Dorsolateral prefrontal cortex (tissue), 120 donors: ENCODE measurements at regions of chr15 and their contacts with region 1.

Region 1: GRCh38 chr15:76931397-76932007 is at the start of gene RCN2:
- DNase-seq: peak; percentile 90 to 98 (median 95)
- H3K4me3 ChIP-seq: peak within 1 kb of the TSS; percentile 45 to 100 (median 83)
- H3K27ac ChIP-seq: peak within 1 kb of the TSS; percentile 41 to 96 (median 87)
- H3K27me3 ChIP-seq: no peaks in the 10 kb centered on the region
- CTCF ChIP-seq: peak in 41 of 56 donors; percentile 3 to 66 (median 32)
- total RNA-seq, gene RCN2: 30.8 to 80.2 (median 58.9) TPM

Region 2: DNA sequence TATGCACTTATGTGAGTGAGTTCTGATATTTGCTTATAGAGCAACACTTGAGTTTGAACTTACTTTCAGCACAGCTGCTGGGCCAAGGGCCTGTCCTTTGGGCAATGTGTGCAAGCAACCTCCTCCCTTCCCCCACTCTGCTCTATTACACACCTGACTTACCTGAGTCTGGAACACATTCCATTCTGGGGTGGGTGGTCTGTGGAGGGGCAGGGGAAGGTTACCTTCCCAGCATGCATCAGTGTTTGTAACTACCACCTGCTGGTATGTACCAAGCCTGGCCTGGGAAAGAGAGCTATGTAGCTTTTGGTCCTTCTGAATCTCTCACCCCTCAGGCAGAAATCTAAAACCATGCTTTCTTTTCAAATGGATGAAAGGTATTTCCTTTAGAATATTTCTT is 492.0 kb before region 1 on chr15:
- intact Hi-C with region 1: no loop called
- DNase-seq: no peak
- H3K4me3 ChIP-seq: no peak overlapping the region
- H3K27ac ChIP-seq: peak overlapping the region in 1 of 59 donors; percentile 7
- H3K27me3 ChIP-seq: no peaks in the 10 kb centered on the region
- CTCF ChIP-seq: no peak

Region 3: GRCh38 chr15:76905013-76905839 is 26.3 kb before region 1 on chr15 and contains the start of gene SCAPER:
- intact Hi-C with region 1: loop called (anchors 1 kb)
- DNase-seq: peak; percentile 88 to 96 (median 92)
- H3K4me3 ChIP-seq: peak within 1 kb of the TSS; percentile 69 to 99 (median 93)
- H3K27ac ChIP-seq: peak within 1 kb of the TSS; percentile 77 to 99 (median 96)
- H3K27me3 ChIP-seq: no peaks in the 10 kb centered on the region
- CTCF ChIP-seq: peak in 42 of 56 donors; percentile 10 to 62 (median 32)
- total RNA-seq, gene SCAPER: 50.1 to 102 (median 70.1) TPM

Region 4: DNA sequence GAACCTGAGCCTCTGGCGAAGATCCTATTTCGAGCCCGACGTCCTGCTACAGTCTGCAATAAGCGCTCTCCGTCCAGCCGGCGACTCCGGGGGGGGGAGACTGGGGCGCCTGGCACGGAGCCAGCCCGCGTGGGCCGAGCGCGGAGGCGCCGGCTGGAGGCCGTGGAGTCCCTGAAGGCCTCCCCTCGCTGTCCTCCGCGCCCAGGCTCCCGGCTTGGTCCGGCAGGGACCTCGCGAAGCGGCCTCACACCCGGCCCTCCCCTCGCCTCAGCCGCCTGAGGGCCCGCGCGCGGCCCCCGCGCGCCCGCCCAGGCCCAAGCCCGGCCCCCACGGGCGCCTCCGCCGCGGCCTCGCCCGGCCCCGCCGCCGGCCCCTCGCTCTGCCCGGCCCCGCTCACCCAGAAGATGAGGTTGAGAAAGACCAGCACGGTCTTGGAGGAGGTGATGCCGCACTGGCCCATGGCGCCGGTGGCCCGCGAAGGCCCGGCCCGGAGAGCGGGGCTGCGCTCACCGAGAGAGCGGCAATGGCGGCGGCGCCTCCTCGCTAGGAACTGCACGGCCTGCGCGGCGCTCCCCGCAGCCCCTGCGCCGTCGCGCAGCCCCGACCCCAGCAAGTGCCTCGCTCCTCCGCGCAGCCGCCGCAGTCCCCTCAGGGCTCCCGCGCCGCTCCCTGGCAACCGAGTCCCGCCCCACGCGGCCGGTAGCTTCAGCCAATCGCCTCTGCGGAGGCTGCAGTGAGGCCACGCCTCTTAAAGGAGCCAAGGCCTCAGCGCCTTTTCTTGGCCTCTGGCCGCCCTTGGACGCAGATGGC is 139.2 kb after region 1 on chr15 and contains the start of gene TSPAN3:
- intact Hi-C with region 1: loop called in 1 of 2 experiments (anchors 5 kb)
- DNase-seq: peak; percentile 87 to 97 (median 94)
- H3K4me3 ChIP-seq: peak within 1 kb of the TSS; percentile 46 to 89 (median 80)
- H3K27ac ChIP-seq: peak within 1 kb of the TSS in 57 of 59 donors; percentile 7 to 94 (median 82)
- H3K27me3 ChIP-seq: no peaks in the 10 kb centered on the region
- CTCF ChIP-seq: peak in 16 of 56 donors; percentile 10 to 39 (median 20)
- total RNA-seq, gene TSPAN3: 209 to 348 (median 291) TPM